ENCODE measurements at regions of chr15 and their contacts with region 1.

Region 1: DNA sequence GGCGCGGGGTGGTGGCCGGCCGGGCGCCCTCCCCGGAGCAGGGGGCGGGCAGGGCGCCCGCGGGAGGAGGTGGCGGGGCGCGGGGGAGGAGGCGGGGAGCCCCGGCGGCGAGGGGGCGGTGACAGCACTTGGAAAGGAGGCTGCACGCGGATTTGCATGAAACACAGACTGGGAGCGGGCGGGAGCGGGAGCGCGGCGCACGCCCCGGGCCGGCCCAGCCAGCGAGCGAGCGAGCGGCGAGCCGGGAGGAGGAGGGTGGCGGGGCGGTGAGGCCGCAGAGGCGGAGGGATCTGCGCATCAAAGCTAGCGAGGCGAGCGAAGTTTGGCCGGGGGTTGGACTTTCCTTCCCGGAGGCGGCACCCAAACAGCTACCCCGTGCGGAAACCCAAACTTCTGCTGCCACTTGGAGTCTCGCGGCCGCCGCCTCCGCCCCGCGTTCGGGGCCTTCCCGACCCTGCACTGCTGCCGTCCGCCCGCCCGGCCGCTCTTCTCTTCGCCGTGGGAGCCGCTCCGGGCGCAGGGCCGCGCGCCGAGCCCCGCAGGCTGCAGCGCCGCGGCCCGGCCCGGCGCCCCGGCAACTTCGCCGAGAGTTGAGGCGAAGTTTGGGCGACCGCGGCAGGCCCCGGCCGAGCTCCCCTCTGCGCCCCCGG is at the start of gene SMAD3:
- DNase-seq: peak; percentile 91
- H3K4me3 ChIP-seq: peak within 1 kb of the TSS; percentile 73 to 78
- H3K27ac ChIP-seq: peak within 1 kb of the TSS; percentile 86 to 91
- H3K4me1 ChIP-seq: peaks cover 23% of the 10 kb centered on the region
- H3K27me3 ChIP-seq: no peaks in the 10 kb centered on the region
- CTCF ChIP-seq: no peak
- POLR2A ChIP-seq: no peak
- total RNA-seq, gene SMAD3: 18.7 to 31.6 TPM

Region 2: GRCh38 chr15:67120839-67121643 is 55.5 kb after region 1 on chr15:
- intact Hi-C with region 1: loop called (anchors 10 kb)
- DNase-seq: peak; percentile 85
- H3K4me3 ChIP-seq: no peak overlapping the region
- H3K27ac ChIP-seq: peak overlapping the region; percentile 76 to 84
- H3K4me1 ChIP-seq: peaks cover 42% of the 10 kb centered on the region
- H3K27me3 ChIP-seq: no peaks in the 10 kb centered on the region
- CTCF ChIP-seq: no peak
- POLR2A ChIP-seq: no peak

Measured in testis (tissue), 5 donors.